A673 (cell line): ENCODE measurements at regions of chr1 and their contacts with region 1.

Region 1: GRCh38 chr1:182397771-182398393 is 2.6 kb downstream of the TEDDM1 start:
- DNase-seq: no peak
- H3K4me3 ChIP-seq: no peak overlapping the region
- H3K27ac ChIP-seq: no peak overlapping the region
- H3K4me1 ChIP-seq: peaks cover 6% of the 10 kb centered on the region
- H3K27me3 ChIP-seq: no peaks in the 10 kb centered on the region
- CTCF ChIP-seq: no peak

Region 2: GRCh38 chr1:182143154-182143657 is 254.7 kb before region 1 on chr1:
- CTCF ChIA-PET with region 1: interaction called, 39 read pairs
- POLR2A ChIA-PET with region 1: no interaction called
- intact Hi-C with region 1: loop called (anchors 1 kb)
- DNase-seq: peak; percentile 84
- H3K4me3 ChIP-seq: no peak overlapping the region
- H3K27ac ChIP-seq: no peak overlapping the region
- H3K4me1 ChIP-seq: no peaks in the 10 kb centered on the region
- H3K27me3 ChIP-seq: peaks cover 7% of the 10 kb centered on the region
- CTCF ChIP-seq: peak; percentile 96